ENCODE measurements at regions of chr11 and their contacts with region 1.

Region 1: GRCh38 chr11:121655537-121656327 is 203.0 kb upstream of the SORL1-AS1 start:
- DNase-seq: peak; percentile 89 to 95
- H3K4me3 ChIP-seq: peak overlapping the region; percentile 52 to 55
- H3K27ac ChIP-seq: peak overlapping the region; percentile 94 to 95
- H3K4me1 ChIP-seq: peaks cover 0 to 22% (median 14%) of the 10 kb centered on the region in 4 donors
- H3K27me3 ChIP-seq: no peaks in the 10 kb centered on the region
- CTCF ChIP-seq: peak; percentile 91 to 92

Region 2: GRCh38 chr11:121727942-121728341 is 72.2 kb after region 1 on chr11:
- intact Hi-C with region 1: no loop called
- DNase-seq: no peak
- H3K4me3 ChIP-seq: no peak overlapping the region
- H3K27ac ChIP-seq: no peak overlapping the region
- H3K4me1 ChIP-seq: peaks cover 0 to 7% (median 3%) of the 10 kb centered on the region in 4 donors
- H3K27me3 ChIP-seq: no peaks in the 10 kb centered on the region
- CTCF ChIP-seq: no peak

Region 3: DNA sequence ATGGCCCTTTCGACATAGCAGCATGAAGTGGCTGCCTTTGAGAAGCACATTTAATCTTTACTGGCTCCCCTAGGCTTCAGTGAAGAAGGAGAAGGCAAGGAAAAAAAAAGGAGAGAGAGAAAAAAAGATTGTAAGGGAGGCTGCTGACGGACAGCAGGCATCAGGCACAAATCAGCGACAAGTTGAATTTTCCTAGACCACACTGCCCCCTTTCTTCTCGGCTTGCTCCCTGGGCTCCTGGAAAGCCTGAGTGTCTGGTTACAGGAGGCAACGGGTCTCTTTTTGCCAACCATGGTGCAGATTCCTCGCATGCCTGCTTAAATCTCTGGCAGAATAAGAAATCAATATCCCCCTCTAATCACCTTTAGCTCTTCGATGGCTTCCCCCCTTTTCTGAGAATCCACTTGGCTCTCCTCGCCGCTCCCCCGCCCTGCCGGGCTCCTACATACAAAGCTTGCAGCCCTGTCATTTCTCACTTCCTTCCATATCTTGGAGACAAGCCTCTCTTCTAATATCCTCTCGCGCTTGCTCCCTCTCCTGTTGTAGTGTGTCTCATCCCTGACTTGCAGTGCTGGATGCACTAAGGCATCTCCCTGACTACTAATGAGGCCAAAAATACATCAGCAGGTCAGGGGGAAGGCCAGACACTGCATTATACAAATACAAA is 446.0 kb after region 1 on chr11:
- intact Hi-C with region 1: loop called (anchors 5 kb)
- DNase-seq: peak; percentile 78 to 90
- H3K4me3 ChIP-seq: peak overlapping the region; percentile 64 to 68
- H3K27ac ChIP-seq: peak overlapping the region; percentile 80 to 91
- H3K4me1 ChIP-seq: peaks cover 0 to 39% (median 9%) of the 10 kb centered on the region in 4 donors
- H3K27me3 ChIP-seq: no peaks in the 10 kb centered on the region
- CTCF ChIP-seq: peak; percentile 64 to 65

Region 4: GRCh38 chr11:122202951-122203456 is 547.3 kb after region 1 on chr11:
- intact Hi-C with region 1: loop called (anchors 5 kb)
- DNase-seq: peak; percentile 63 to 87
- H3K4me3 ChIP-seq: peak overlapping the region; percentile 46 to 55
- H3K27ac ChIP-seq: peak overlapping the region; percentile 76 to 77
- H3K4me1 ChIP-seq: peaks cover 0 to 78% (median 36%) of the 10 kb centered on the region in 4 donors
- H3K27me3 ChIP-seq: no peaks in the 10 kb centered on the region
- CTCF ChIP-seq: peak; percentile 95 to 99

Region 5: DNA sequence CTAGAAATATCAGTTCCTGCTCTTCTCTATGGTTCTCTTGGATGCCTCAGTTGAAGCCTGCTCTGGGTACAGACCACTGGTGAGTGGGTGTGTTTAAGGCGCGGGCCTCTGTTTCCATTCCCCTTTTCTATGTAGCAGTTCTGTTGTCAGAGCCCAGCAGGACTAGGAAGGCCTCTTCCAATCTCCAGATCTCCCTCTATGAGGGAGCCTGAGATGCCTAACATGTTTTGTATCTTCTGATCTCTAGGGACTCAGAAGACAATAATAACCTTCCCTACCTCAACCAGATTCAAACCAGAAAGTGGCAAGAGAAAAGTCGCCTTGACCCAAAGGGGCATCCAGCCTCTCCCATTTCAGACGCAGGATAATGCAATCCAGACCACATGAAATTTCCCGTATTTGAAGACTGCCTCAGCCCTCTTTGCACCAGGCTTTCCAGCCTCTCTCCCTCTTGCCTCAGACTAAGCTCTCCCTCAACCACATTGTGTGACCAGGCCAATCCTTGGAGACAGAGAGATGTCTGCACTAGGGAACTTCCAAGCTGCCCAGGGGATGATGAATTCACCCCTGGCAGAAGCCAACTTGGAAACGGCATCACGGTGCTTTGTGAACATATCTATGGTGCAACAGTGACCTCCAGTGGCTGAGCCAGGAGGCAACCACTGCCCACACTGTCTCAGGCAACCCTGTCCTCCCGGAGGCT is 849.7 kb after region 1 on chr11:
- intact Hi-C with region 1: loop called (anchors 2 kb)
- DNase-seq: peak; percentile 90 to 92
- H3K4me3 ChIP-seq: no peak overlapping the region
- H3K27ac ChIP-seq: peak overlapping the region; percentile 13 to 55
- H3K4me1 ChIP-seq: peaks cover 0 to 7% (median 3%) of the 10 kb centered on the region in 4 donors
- H3K27me3 ChIP-seq: no peaks in the 10 kb centered on the region
- CTCF ChIP-seq: peak; percentile 75 to 92

Measured in tibial artery (tissue), 4 donors.